ENCODE measurements at regions of chr1 and their contacts with region 1.

Region 1: GRCh38 chr1:165630629-165631341 is at the start of gene MGST3:
- DNase-seq: peak; percentile 93
- H3K4me3 Mint-ChIP-seq: no peak within 1 kb of the TSS
- H3K27ac Mint-ChIP-seq: peak within 1 kb of the TSS; percentile 52
- H3K4me1 Mint-ChIP-seq: peaks cover 23% of the 10 kb centered on the region
- H3K27me3 Mint-ChIP-seq: peaks cover 6% of the 10 kb centered on the region
- total RNA-seq, gene MGST3: 63.6 and 63.7 TPM in 2 replicates

Region 2: DNA sequence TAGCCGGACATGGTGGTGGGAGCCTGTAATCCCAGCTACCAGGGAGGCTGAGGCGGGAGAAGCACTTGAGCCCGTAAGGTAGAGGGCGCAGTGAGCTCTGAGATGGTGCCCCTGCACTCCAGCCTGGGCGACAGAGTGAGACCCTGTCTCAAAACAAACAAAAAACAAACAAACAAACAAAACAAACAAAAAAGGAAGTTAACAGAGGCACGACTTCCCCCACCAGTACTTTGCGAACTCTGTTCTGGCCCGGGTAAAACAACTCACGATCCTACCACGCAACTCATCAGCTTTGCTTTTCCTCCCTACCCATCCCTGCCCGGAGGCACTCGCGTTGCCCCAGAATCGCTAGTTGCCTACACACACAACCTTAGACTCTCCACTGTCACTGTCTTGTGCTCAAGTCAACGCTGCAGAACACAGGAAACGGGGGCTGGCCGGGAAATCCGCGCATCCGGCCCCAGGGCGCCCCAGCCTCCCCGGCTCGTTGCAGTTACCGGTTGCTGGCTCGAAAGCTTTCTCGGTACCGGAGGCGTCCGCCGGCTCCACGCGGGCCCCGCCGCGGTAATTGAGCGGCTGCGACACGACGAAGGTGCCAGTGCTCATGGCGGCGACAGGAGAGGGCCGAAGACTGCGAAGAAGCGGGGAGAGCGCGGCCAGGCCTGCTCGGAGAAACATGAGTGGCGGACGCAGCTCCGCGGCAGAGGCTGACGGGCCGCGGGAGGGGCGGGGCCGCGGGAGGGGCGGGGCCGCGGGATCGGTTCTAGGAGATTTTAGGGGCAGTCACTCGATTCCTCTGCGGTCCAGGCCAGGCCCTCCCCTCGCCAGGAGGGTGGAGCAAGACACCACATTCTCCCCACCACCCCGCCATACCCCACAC is 67.3 kb after region 1 on chr1 and contains the start of gene ALDH9A1:
- intact Hi-C with region 1: loop called (anchors 1 kb)
- DNase-seq: peak; percentile 84
- H3K4me3 Mint-ChIP-seq: peak within 1 kb of the TSS; percentile 100
- H3K27ac Mint-ChIP-seq: peak within 1 kb of the TSS; percentile 99
- H3K4me1 Mint-ChIP-seq: peaks cover 18% of the 10 kb centered on the region
- H3K27me3 Mint-ChIP-seq: peaks cover 3% of the 10 kb centered on the region
- total RNA-seq, gene ALDH9A1: 43.3 and 47.4 TPM in 2 replicates